ENCODE measurements at regions of chr1 and their contacts with region 1.

Region 1: GRCh38 chr1:158203693-158204457 is 23.2 kb downstream of the CD1D start:
- DNase-seq: peak in 3 of 35 experiments; percentile 5 to 70 (median 16)
- ATAC-seq: peak in 3 of 4 experiments; percentile 65 to 75 (median 71)
- H3K4me3 ChIP-seq: peak overlapping the region in 1 of 2 donors; percentile 32
- H3K4me3 Mint-ChIP-seq: no peak overlapping the region
- H3K27ac ChIP-seq: no peak overlapping the region
- H3K27ac Mint-ChIP-seq: no peak overlapping the region
- H3K4me1 ChIP-seq: peaks cover 3 to 6% of the 10 kb centered on the region in 2 experiments
- H3K4me1 Mint-ChIP-seq: peaks cover 10 to 16% (median 13%) of the 10 kb centered on the region in 3 donors
- H3K27me3 ChIP-seq: peaks cover 0 to under 1% of the 10 kb centered on the region in 2 experiments
- H3K27me3 Mint-ChIP-seq: peaks cover 18 to 29% of the 10 kb centered on the region in 2 donors

Region 2: GRCh38 chr1:158329733-158330132 is 125.9 kb after region 1 on chr1:
- CTCF ChIA-PET with region 1: interaction called in 1 of 2 experiments, 11 read pairs
- POLR2A ChIA-PET with region 1: no interaction called
- DNase-seq: peak in 4 of 35 experiments; percentile 2 to 32 (median 4)
- ATAC-seq: no peak
- H3K4me3 ChIP-seq: no peak overlapping the region
- H3K4me3 Mint-ChIP-seq: no peak overlapping the region
- H3K27ac ChIP-seq: no peak overlapping the region
- H3K27ac Mint-ChIP-seq: no peak overlapping the region
- H3K4me1 ChIP-seq: peaks cover 0 to 17% of the 10 kb centered on the region in 2 experiments
- H3K4me1 Mint-ChIP-seq: peaks cover 13 to 17% (median 15%) of the 10 kb centered on the region in 3 donors
- H3K27me3 ChIP-seq: peaks cover 0 to 7% of the 10 kb centered on the region in 2 experiments
- H3K27me3 Mint-ChIP-seq: peaks cover 13 to 17% of the 10 kb centered on the region in 2 donors

Region 3: DNA sequence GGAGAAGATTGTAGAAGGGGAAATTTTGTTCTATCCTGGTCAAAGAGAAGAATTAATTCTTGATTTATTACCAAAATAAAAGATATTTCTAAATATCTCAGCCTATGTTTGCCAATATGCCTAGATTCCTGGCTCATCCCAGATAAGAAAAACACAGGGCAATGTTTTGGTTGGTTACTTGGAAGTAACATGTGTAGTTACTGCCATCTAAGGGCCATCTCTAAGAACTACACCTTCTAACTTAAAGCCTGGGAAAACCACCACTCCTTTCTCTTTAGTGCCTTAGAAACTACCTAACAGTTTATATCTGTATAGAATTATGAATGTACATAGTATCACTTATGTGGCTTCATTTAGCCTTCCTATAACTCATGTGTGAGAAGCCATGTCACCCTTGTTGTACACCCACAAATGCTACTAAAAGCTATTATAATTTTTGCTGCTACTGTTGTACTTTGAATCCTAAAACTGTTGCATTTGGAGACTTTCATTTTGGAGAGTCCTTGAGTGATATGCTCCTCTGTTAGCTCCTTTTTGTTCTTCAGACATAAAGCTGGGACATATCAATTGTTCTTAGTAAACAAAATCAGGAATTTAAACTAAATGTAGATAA is 868.2 kb after region 1 on chr1:
- CTCF ChIA-PET with region 1: interaction called, 11 to 27 read pairs
- POLR2A ChIA-PET with region 1: no interaction called
- DNase-seq: peak in 2 of 35 experiments; percentile 10 to 73
- ATAC-seq: no peak
- H3K4me3 ChIP-seq: no peak overlapping the region
- H3K4me3 Mint-ChIP-seq: no peak overlapping the region
- H3K27ac ChIP-seq: no peak overlapping the region
- H3K27ac Mint-ChIP-seq: peak overlapping the region in 1 of 2 donors; percentile 16
- H3K4me1 ChIP-seq: peaks cover 5 to 23% of the 10 kb centered on the region in 2 experiments
- H3K4me1 Mint-ChIP-seq: peaks cover 17 to 55% (median 30%) of the 10 kb centered on the region in 3 donors
- H3K27me3 ChIP-seq: no peaks in the 10 kb centered on the region
- H3K27me3 Mint-ChIP-seq: no peaks in the 10 kb centered on the region